Calu3 (cell line): ENCODE measurements at regions of chr5 and their contacts with region 1.

Region 1: GRCh38 chr5:91101600-91102379 is 281.3 kb downstream of the ARRDC3 start:
- DNase-seq: peak; percentile 80
- H3K4me3 Mint-ChIP-seq: no peak overlapping the region
- H3K27ac Mint-ChIP-seq: no peak overlapping the region
- H3K4me1 Mint-ChIP-seq: peaks cover 10% of the 10 kb centered on the region
- H3K27me3 Mint-ChIP-seq: no peaks in the 10 kb centered on the region
- CTCF ChIP-seq: peak; percentile 86

Region 2: GRCh38 chr5:90866333-90866732 is 235.5 kb before region 1 on chr5:
- CTCF ChIA-PET with region 1: no interaction called
- intact Hi-C with region 1: loop called (anchors 2 kb)
- DNase-seq: no peak
- H3K4me3 Mint-ChIP-seq: no peak overlapping the region
- H3K27ac Mint-ChIP-seq: no peak overlapping the region
- H3K4me1 Mint-ChIP-seq: peaks cover 10% of the 10 kb centered on the region
- H3K27me3 Mint-ChIP-seq: no peaks in the 10 kb centered on the region
- CTCF ChIP-seq: peak; percentile 64

Region 3: GRCh38 chr5:90932052-90932699 is 169.6 kb before region 1 on chr5:
- CTCF ChIA-PET with region 1: no interaction called
- intact Hi-C with region 1: loop called (anchors 2 kb)
- DNase-seq: peak; percentile 72
- H3K4me3 Mint-ChIP-seq: no peak overlapping the region
- H3K27ac Mint-ChIP-seq: no peak overlapping the region
- H3K4me1 Mint-ChIP-seq: peaks cover 22% of the 10 kb centered on the region
- H3K27me3 Mint-ChIP-seq: no peaks in the 10 kb centered on the region
- CTCF ChIP-seq: peak; percentile 76

Region 4: GRCh38 chr5:91151947-91152346 is 50.2 kb after region 1 on chr5:
- CTCF ChIA-PET with region 1: no interaction called
- intact Hi-C with region 1: no loop called
- DNase-seq: peak; percentile 72
- H3K4me3 Mint-ChIP-seq: no peak overlapping the region
- H3K27ac Mint-ChIP-seq: no peak overlapping the region
- H3K4me1 Mint-ChIP-seq: peaks cover 41% of the 10 kb centered on the region
- H3K27me3 Mint-ChIP-seq: no peaks in the 10 kb centered on the region
- CTCF ChIP-seq: no peak

Region 5: DNA sequence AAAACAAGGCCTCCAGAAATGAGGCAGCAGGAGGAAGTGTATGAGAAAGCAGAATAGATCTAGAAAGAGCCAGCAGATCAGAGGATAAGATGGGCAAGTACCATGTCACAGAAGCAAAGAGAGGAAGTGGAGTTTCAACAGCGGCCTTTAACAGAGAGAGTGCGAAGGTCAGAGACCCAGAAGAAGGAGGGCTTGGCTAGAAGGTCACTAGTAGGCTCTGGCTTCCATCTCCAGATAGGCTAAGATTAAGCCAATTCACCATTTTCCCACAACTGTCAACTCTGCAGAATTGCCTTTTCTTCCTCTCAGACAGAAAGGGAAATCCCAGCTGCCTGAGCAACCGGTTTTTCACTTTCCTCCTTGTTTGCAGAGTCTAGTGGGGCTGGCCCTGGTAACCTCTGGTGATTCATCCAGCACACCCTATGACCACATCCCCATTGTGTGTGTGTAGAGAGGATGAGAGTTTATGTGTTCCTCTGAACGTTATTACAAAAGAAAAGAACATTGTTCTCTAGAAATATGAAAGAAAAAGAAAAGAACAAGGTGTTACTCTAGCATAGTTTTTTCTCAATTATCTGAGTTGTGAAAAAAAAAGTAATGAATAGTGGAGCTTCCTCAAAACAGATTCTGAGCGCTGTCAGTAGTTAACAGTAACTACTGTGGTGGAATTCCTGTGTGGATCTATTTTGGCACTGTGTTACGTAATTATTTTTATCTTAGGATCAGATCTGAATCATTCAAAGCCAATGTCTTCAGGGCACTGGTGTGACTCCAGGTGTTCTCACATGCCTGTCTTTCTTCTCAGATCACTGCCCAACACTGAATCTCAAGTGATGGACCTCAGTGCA is 61.0 kb after region 1 on chr5:
- CTCF ChIA-PET with region 1: no interaction called
- intact Hi-C with region 1: loop called (anchors 5 kb)
- DNase-seq: peak; percentile 94
- H3K4me3 Mint-ChIP-seq: peak overlapping the region; percentile 2
- H3K27ac Mint-ChIP-seq: peak overlapping the region; percentile 53
- H3K4me1 Mint-ChIP-seq: peaks cover 55% of the 10 kb centered on the region
- H3K27me3 Mint-ChIP-seq: no peaks in the 10 kb centered on the region
- CTCF ChIP-seq: no peak

Region 6: DNA sequence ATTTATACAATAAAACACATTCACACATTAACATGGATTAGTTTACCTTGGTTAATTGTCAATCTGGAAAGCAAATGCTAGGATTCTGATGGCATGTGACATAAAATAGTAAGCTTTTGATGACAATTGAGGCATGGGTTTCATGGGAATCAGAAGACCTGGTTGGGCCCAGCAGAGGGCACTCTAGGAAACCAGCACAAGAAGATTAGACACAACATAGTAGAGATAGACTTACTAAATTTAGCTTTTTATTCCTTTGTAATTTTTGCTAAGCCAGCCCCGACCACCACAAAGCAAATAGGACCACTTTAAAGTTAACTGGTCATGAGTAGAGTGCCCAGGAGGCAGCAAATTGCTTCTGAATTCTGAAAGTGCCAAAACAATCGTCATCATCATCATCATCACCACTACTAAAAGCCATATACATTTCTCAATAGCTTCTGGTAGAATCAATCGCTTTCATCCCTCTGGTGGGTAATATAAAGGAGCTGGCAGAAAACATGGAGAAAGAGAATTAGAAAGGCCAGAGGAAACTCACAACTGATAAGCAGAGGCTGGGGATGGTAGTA is 118.1 kb after region 1 on chr5:
- CTCF ChIA-PET with region 1: interaction called, 4 read pairs
- intact Hi-C with region 1: loop called (anchors 1 kb)
- DNase-seq: peak; percentile 56
- H3K4me3 Mint-ChIP-seq: no peak overlapping the region
- H3K27ac Mint-ChIP-seq: peak overlapping the region; percentile 51
- H3K4me1 Mint-ChIP-seq: peaks cover 45% of the 10 kb centered on the region
- H3K27me3 Mint-ChIP-seq: no peaks in the 10 kb centered on the region
- CTCF ChIP-seq: peak; percentile 32

Region 7: DNA sequence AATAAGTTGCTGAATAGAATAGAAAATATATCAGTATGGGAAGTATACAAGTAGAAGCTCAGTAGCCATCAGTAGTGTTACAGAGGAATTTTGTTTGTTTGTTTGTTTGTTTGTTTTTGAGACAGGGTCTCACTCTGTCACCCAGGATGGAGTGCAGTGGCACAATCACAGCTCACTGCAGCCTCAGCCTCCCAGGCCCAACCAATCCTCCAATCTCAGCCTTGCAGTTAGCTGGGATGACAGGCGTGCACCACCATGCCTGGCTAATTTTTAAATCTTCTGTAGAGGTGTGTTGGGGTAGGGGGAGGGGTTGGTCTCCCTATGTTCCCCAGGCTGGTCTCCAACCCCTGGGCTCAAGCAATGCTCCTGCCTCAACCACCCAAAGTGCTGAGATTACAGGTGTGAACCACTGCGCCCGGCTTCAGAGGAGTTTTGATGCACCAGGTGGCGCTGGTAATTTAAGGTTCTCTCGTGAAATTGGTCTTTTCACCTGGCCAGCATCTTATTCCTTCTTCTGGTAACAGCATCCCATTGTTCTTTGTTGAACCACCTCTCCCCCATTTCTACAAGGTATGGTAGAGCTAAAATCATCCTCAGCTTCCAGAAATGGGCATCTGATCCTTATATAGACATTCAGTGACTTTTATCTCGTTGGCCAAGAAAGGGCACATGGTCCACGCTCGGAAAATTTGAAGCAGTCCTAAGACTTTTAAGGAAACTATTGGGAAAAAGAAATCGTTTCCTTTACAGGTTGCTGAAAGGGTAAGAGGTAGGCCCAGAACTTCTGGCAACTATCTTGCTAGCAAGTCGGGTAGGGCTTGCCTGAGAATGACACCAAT is 124.3 kb after region 1 on chr5:
- CTCF ChIA-PET with region 1: no interaction called
- intact Hi-C with region 1: loop called (anchors 1 kb)
- DNase-seq: peak; percentile 74
- H3K4me3 Mint-ChIP-seq: no peak overlapping the region
- H3K27ac Mint-ChIP-seq: no peak overlapping the region
- H3K4me1 Mint-ChIP-seq: peaks cover 33% of the 10 kb centered on the region
- H3K27me3 Mint-ChIP-seq: no peaks in the 10 kb centered on the region
- CTCF ChIP-seq: peak; percentile 52

Region 8: GRCh38 chr5:91419571-91420537 is 318.1 kb after region 1 on chr5:
- CTCF ChIA-PET with region 1: interaction called, 3 read pairs
- intact Hi-C with region 1: loop called (anchors 1 kb)
- DNase-seq: peak; percentile 77
- H3K4me3 Mint-ChIP-seq: no peak overlapping the region
- H3K27ac Mint-ChIP-seq: no peak overlapping the region
- H3K4me1 Mint-ChIP-seq: peaks cover 31% of the 10 kb centered on the region
- H3K27me3 Mint-ChIP-seq: no peaks in the 10 kb centered on the region
- CTCF ChIP-seq: peak; percentile 79